ENCODE measurements at regions of chr1 and their contacts with region 1.

Region 1: DNA sequence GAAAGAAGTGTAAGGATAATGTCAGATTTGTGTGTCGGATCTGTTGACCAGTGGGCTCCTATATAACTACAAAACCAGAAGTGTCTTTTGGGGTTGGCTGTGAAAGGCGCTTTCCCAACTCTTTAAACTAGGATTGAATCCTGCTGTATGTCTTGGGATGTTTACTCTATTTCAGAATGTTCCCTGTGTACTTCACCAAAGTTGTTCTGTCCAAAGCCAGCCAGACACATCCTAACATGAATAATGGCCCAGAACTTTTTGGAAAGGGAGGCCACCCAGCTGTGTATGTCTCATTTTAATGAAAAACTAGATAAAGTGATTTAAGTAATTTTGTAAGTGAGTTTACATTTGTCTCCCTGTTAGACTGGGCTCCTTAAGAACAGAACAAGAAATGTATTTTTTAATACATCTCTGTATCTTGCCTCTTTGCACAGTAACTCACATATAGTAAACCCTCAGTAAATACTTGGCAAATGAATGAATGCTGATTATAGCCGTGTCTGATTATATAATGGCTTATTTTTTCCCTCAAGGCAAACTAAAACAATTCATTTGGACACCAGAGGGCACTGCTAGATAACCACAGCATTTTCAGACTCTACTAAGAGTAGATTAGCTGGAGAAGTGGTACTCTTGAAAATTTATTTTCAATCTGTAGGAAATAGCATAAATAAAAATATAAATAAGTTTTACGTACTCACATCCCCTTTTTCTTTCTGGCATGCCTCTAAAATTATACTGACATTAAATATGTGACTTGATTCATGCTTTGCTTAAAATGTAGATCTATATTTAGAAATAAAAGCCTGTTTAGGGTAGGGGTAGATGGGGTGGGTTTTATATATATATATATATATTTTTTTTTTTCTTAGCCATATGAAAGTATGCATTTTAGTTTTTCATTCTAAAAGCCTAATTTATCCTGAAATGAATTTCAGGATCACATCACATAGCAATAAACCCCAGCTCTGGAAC is 23.8 kb downstream of the TSEN15 start:
- DNase-seq: no peak
- H3K4me3 ChIP-seq: no peak overlapping the region
- H3K27ac ChIP-seq: peak overlapping the region; percentile 29 to 58 (median 39)
- H3K4me1 ChIP-seq: peaks cover 12 to 45% (median 33%) of the 10 kb centered on the region in 4 donors
- H3K27me3 ChIP-seq: no peaks in the 10 kb centered on the region
- CTCF ChIP-seq: peak; percentile 77 to 83 (median 77)
- EP300 ChIP-seq: no peak
- POLR2A ChIP-seq: no peak

Region 2: DNA sequence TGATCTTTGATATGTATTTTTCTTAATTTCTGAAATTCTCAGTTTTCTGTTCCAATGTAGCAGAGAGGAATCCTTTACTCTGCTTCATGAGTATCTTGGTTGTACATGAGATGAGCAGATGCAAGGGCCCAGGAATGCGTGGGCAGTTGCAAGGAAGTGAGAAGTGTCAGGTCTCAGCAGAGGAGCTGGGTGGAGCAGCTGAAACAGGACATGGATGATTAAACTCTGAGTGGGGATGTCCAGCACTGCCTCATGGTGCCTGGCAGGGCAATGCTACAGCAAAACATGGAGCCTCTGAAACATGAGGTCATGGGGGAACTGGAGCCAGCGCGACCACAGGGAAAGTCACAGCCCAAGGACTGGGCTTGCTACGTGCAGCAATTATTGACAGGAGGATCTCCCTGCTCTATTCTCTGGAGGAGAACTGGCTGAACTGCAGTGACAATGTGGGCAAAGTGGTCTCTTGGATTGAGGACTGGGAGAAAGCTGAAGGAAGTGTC is 86.2 kb before region 1 on chr1:
- intact Hi-C with region 1: no loop called
- DNase-seq: no peak
- H3K4me3 ChIP-seq: no peak overlapping the region
- H3K27ac ChIP-seq: no peak overlapping the region
- H3K4me1 ChIP-seq: peaks cover 0 to 11% (median 0%) of the 10 kb centered on the region in 4 donors
- H3K27me3 ChIP-seq: no peaks in the 10 kb centered on the region
- CTCF ChIP-seq: no peak
- EP300 ChIP-seq: no peak
- POLR2A ChIP-seq: no peak

Region 3: DNA sequence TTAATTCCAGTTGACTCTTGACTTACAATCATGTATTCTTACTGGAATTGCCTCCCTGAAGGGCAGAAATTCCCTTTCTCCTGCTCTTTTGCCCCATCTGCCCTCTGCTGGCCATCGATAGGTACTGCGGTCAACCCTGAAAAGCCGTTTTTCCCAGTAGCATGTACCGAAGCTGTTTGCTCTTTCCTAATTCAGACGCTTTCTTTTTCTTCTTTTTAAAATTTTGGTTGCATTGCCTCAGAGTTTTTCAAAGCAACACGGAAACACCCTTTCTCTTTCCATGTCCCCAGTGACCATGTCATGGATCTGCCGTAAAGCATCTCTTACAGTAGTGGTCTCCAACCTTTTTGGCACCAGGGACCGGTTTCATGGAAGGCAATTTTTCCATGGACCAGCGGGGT is 147.3 kb after region 1 on chr1:
- intact Hi-C with region 1: loop called (anchors 2 kb)
- DNase-seq: no peak
- H3K4me3 ChIP-seq: peak overlapping the region in 1 of 4 donors; percentile 40
- H3K27ac ChIP-seq: no peak overlapping the region
- H3K4me1 ChIP-seq: peaks cover 0 to 10% (median 7%) of the 10 kb centered on the region in 4 donors
- H3K27me3 ChIP-seq: no peaks in the 10 kb centered on the region
- CTCF ChIP-seq: peak; percentile 90 to 95 (median 92)
- EP300 ChIP-seq: no peak
- POLR2A ChIP-seq: no peak

Region 4: GRCh38 chr1:184563308-184563707 is 488.0 kb after region 1 on chr1:
- intact Hi-C with region 1: loop called (anchors 5 kb)
- DNase-seq: no peak
- H3K4me3 ChIP-seq: no peak overlapping the region
- H3K27ac ChIP-seq: peak overlapping the region in 1 of 4 donors; percentile 70
- H3K4me1 ChIP-seq: peaks cover 24 to 31% (median 29%) of the 10 kb centered on the region in 4 donors
- H3K27me3 ChIP-seq: no peaks in the 10 kb centered on the region
- CTCF ChIP-seq: peak; percentile 62 to 67 (median 63)
- EP300 ChIP-seq: no peak
- POLR2A ChIP-seq: no peak

Region 5: GRCh38 chr1:184691719-184692324 is 616.5 kb after region 1 on chr1:
- intact Hi-C with region 1: loop called (anchors 5 kb)
- DNase-seq: no peak
- H3K4me3 ChIP-seq: no peak overlapping the region
- H3K27ac ChIP-seq: no peak overlapping the region
- H3K4me1 ChIP-seq: no peaks in the 10 kb centered on the region
- H3K27me3 ChIP-seq: no peaks in the 10 kb centered on the region
- CTCF ChIP-seq: peak; percentile 81 to 85 (median 83)
- EP300 ChIP-seq: no peak
- POLR2A ChIP-seq: no peak

Measured in esophagus muscularis mucosa (tissue), 4 donors.